ENCODE measurements at regions of chr5 and their contacts with region 1.

Region 1: DNA sequence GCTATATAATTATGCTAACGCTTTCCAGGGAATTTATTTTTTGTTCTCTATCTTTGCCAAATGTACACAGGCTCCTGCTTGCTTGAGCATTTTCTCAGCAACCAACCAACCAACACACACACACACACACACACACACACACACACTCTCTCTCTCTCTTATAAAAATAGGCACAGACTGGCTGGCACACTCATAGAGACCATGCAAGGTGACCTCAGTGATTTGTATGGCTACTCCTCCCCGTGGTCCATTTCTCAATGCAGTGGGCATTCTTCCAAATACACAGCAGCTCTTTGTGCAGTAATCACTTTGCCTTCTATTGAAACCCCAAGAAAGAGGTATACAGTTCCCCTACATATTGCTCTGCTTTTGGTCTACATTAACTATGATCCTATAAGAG is 416.0 kb downstream of the MAN2A1 start:
- DNase-seq: peak; percentile 25 to 84
- H3K4me3 ChIP-seq: no peak overlapping the region
- H3K27ac ChIP-seq: no peak overlapping the region
- H3K4me1 ChIP-seq: peaks cover 0 to 16% of the 10 kb centered on the region in 2 donors
- H3K27me3 ChIP-seq: no peaks in the 10 kb centered on the region
- CTCF ChIP-seq: no peak

Region 2: GRCh38 chr5:109713453-109713852 is 392.2 kb before region 1 on chr5:
- intact Hi-C with region 1: no loop called
- DNase-seq: no peak
- H3K4me3 ChIP-seq: no peak overlapping the region
- H3K27ac ChIP-seq: peak overlapping the region in 1 of 2 donors; percentile 8
- H3K4me1 ChIP-seq: peaks cover 0 to 16% of the 10 kb centered on the region in 2 donors
- H3K27me3 ChIP-seq: no peaks in the 10 kb centered on the region
- CTCF ChIP-seq: no peak

Region 3: DNA sequence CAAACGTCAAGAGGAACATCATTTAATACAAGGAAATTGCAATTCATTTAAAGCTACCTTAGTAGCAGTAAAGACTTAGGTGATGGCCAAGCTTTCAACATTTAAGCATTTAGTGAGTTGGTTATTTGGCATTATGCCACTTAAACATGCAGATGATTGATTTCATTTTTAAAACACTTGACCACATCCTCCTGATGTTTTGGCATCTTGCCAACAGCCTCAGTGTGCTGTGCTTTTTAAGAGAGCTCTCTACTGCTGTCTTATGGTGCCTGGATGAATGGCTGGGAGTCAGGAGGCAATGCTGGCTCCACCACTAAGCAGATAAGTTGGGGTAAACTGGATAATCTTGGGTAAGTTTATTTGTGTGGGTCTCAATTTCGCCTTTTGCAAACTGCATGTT is 51.5 kb before region 1 on chr5:
- intact Hi-C with region 1: loop called (anchors 5 kb)
- DNase-seq: peak; percentile 14 to 78
- H3K4me3 ChIP-seq: no peak overlapping the region
- H3K27ac ChIP-seq: no peak overlapping the region
- H3K4me1 ChIP-seq: peaks cover 0 to 16% of the 10 kb centered on the region in 2 donors
- H3K27me3 ChIP-seq: no peaks in the 10 kb centered on the region
- CTCF ChIP-seq: peak in 2 of 3 experiments; percentile 37 to 41

Region 4: GRCh38 chr5:110072646-110073045 is 33.0 kb before region 1 on chr5:
- intact Hi-C with region 1: no loop called
- DNase-seq: no peak
- H3K4me3 ChIP-seq: no peak overlapping the region
- H3K27ac ChIP-seq: no peak overlapping the region
- H3K4me1 ChIP-seq: no peaks in the 10 kb centered on the region
- H3K27me3 ChIP-seq: no peaks in the 10 kb centered on the region
- CTCF ChIP-seq: no peak

Measured in ascending aorta (tissue), 2 donors.